Aorta (tissue), 5 donors: ENCODE measurements at regions of chr7 and their contacts with region 1.

Region 1: GRCh38 chr7:87416682-87417587 is 58.5 kb downstream of the ABCB4 start:
- DNase-seq: peak in 1 of 2 donors; percentile 56
- ATAC-seq: peak; percentile 77
- H3K4me3 ChIP-seq: no peak overlapping the region
- H3K27ac ChIP-seq: no peak overlapping the region
- H3K4me1 ChIP-seq: peaks cover 0 to 2% of the 10 kb centered on the region in 2 donors
- H3K27me3 ChIP-seq: no peaks in the 10 kb centered on the region

Region 2: DNA sequence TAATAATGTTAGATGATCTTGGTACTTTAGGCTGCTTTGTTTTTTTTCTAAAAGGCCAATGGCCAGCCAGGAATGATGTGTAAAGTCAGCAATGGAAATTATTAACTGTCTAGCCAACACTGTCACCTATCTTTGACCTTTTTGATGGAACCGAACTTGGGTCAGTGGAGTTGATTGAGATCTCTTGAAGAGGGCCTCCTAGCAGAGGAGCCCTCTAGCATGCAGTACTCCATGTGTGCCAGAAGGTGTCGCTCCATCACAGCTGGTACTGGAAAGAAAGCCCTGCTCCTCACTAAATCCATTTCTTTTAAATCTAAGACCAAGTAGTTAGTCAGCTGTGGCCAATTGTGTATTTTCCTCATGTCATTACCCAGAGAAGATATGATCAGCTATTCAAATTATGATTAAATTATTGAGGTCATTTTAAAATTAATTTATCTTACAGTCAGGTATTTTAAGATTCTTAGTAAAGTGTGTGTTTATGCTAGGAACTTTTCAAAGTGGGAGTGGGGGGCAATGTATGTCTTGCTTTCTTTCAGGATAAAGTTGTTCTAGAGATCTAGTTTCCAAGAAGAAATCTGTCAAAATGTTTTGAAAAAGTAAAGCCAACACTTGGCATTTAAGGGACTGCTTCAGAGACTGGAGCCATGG is 104.6 kb before region 1 on chr7:
- intact Hi-C with region 1: loop called (anchors 1 kb)
- DNase-seq: peak in 1 of 2 donors; percentile 49
- ATAC-seq: peak; percentile 94
- H3K4me3 ChIP-seq: no peak overlapping the region
- H3K27ac ChIP-seq: no peak overlapping the region
- H3K4me1 ChIP-seq: no peaks in the 10 kb centered on the region
- H3K27me3 ChIP-seq: no peaks in the 10 kb centered on the region